Activated naive CD8-positive, alpha-beta T cell treated with anti-CD3 and anti-CD28 coated beads, Interleukin-2, amount 10 ng/mL, durations not matched to agents 7 days and 5 days (primary cell): ENCODE measurements at regions of chr3 and their contacts with region 1.

Region 1: DNA sequence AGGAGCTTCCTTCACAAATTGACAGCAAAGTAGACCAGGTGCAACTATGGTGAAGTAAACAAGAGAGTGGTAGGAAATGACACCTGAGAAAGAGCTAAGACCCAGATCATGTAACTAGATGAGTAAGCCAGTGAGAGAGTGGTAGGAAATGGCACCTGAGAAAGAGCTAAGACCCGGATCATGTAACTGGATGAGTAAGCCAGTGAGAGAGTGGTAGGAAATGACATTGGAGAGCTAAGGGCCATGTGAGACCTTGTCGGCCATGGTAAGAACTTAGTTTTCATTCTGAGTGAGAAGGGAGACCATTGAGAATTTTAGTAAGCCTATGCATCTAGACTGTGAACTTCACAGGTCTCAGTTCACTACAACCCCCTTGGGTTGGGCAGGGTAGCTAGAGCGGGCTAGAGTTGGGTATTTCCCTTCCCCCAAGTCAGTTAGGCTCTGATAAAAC is 5.4 kb upstream of the SENP7 start:
- DNase-seq: no peak
- ATAC-seq: peak; percentile 98
- H3K4me3 Mint-ChIP-seq: peak overlapping the region; percentile 52
- H3K27ac Mint-ChIP-seq: peak overlapping the region; percentile 87
- H3K4me1 Mint-ChIP-seq: peaks cover 35% of the 10 kb centered on the region
- H3K27me3 Mint-ChIP-seq: no peaks in the 10 kb centered on the region

Region 2: GRCh38 chr3:101542957-101543356 is 24.5 kb after region 1 on chr3:
- POLR2A ChIA-PET with region 1: interaction called, 16 read pairs
- DNase-seq: no peak
- ATAC-seq: peak; percentile 82
- H3K4me3 Mint-ChIP-seq: peak overlapping the region; percentile 35
- H3K27ac Mint-ChIP-seq: peak overlapping the region; percentile 84
- H3K4me1 Mint-ChIP-seq: peaks cover 28% of the 10 kb centered on the region
- H3K27me3 Mint-ChIP-seq: peaks cover 2% of the 10 kb centered on the region

Region 3: GRCh38 chr3:101561630-101562328 is 43.3 kb after region 1 on chr3 and contains the start of gene TRMT10C:
- POLR2A ChIA-PET with region 1: interaction called, 30 read pairs
- DNase-seq: peak; percentile 89
- ATAC-seq: peak; percentile 97
- H3K4me3 Mint-ChIP-seq: peak within 1 kb of the TSS; percentile 96
- H3K27ac Mint-ChIP-seq: peak within 1 kb of the TSS; percentile 97
- H3K4me1 Mint-ChIP-seq: peaks cover 26% of the 10 kb centered on the region
- H3K27me3 Mint-ChIP-seq: peaks cover 2% of the 10 kb centered on the region
- total RNA-seq, gene TRMT10C: 22.8 to 23.9 TPM